ENCODE measurements at regions of chr14 and their contacts with region 1.

Region 1: DNA sequence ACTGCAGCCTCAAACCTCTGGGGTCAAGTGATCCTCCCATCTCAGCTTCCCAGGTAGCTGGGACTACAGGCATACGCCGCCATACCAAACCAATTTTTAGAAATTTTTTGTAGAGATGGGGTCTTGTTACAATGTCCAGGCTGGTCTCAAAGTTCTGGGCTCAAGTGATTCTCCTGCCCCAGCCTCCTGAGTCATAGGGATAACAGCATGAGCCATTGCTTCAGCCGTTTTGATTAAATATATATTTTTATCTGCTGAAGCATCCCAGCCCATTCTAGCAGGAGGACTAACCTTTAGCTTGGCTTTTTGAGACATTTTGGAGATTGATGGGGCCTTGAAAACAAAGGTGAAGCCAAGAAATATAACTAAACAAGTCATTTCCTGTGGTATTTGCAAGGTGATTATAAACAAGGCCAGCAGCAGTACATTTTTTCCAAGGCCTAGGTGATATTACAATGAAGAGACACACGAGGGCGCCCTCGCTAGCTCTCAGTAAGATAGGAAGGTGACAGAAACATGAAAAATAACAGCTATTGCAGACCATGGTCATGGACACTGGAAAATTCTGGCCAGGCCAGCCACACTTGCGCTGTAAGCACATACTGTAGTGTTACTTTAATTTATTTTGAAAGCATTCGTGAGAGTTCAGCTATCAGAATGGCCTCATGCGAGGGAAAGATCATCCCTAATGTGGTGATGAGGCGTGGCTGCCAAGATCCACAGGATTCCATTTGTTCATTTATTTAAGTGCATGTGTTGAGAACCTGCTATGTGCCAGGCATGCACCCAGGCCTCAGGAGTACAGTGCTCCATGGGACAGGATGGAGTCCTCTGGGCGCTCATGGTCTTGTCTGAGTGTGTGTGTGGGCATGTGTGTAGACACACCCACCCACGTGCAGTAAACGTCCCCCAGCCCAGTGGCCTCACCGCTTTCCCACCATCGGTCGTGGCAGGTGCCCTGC is 63.5 kb downstream of the DGLUCY start:
- DNase-seq: peak; percentile 83
- ATAC-seq: peak; percentile 43

Region 2: GRCh38 chr14:90903101-90903500 is 274.3 kb before region 1 on chr14:
- intact Hi-C with region 1: loop called (anchors 2 kb)
- DNase-seq: no peak
- ATAC-seq: peak; percentile 84

Region 3: GRCh38 chr14:91060351-91061055 is 116.9 kb before region 1 on chr14 and contains the start of gene RPS6KA5:
- intact Hi-C with region 1: loop called (anchors 2 kb)
- DNase-seq: peak; percentile 100
- ATAC-seq: peak; percentile 98
- total RNA-seq, gene RPS6KA5: 10.6 TPM

Region 4: GRCh38 chr14:91114079-91115065 is 63.0 kb before region 1 on chr14:
- intact Hi-C with region 1: loop called (anchors 1 kb)
- DNase-seq: peak; percentile 50
- ATAC-seq: peak; percentile 79

Region 5: GRCh38 chr14:91138511-91139359 is 38.6 kb before region 1 on chr14:
- intact Hi-C with region 1: loop called (anchors 5 kb)
- DNase-seq: no peak
- ATAC-seq: no peak

Region 6: GRCh38 chr14:91286530-91286937 is 109.2 kb after region 1 on chr14:
- intact Hi-C with region 1: loop called (anchors 2 kb)
- DNase-seq: peak; percentile 79
- ATAC-seq: peak; percentile 64